ENCODE measurements at regions of chr17 and their contacts with region 1.

Region 1: DNA sequence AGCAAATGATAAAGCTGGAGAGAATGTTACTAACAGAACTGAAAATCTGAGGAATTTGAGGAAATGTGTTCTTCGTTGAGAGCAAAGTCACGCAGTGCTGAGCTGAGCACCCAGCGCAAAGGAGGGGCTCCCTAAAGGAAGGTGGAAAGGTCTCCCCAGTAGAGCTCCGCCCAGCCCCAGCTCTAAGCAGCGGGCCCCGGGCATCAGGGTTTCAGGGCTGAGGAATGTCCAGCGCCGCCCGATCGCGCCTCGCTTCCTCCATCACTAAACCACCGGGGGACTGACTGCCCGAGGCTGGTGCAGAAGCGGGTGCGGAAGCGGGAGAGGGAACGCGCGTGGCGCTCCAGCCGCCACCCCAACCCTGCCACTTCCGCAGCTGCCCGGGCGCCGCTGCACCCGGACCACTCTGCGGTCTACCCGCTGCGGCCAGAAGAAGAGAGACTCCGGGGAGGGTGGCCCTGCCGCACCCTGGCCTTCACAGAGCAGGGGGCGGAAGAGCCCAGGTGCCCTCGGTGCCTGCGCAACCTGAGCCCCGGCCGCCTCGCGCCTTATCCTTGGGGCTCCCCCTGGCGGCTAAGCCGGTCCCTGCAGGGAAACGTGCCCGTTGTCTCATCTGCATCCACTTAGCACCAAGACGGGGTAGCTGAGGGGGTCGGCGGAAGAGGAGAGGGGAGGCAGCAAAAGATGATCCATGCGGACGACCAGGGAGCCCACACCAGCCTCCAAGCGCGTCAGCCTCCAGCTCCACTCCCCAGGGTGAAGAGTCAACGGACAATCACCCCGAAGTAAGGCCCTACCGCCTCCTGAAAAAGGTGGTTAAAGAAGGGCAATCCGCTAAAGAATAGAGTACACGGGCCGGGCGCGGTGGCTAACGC is 12.4 kb upstream of the GUCY2D start:
- DNase-seq: peak; percentile 78 to 94 (median 93)
- ATAC-seq: peak; percentile 83 to 90
- H3K4me3 ChIP-seq: peak overlapping the region; percentile 49
- H3K27ac ChIP-seq: no peak overlapping the region
- H3K4me1 ChIP-seq: no peaks in the 10 kb centered on the region
- H3K27me3 ChIP-seq: no peaks in the 10 kb centered on the region

Region 2: DNA sequence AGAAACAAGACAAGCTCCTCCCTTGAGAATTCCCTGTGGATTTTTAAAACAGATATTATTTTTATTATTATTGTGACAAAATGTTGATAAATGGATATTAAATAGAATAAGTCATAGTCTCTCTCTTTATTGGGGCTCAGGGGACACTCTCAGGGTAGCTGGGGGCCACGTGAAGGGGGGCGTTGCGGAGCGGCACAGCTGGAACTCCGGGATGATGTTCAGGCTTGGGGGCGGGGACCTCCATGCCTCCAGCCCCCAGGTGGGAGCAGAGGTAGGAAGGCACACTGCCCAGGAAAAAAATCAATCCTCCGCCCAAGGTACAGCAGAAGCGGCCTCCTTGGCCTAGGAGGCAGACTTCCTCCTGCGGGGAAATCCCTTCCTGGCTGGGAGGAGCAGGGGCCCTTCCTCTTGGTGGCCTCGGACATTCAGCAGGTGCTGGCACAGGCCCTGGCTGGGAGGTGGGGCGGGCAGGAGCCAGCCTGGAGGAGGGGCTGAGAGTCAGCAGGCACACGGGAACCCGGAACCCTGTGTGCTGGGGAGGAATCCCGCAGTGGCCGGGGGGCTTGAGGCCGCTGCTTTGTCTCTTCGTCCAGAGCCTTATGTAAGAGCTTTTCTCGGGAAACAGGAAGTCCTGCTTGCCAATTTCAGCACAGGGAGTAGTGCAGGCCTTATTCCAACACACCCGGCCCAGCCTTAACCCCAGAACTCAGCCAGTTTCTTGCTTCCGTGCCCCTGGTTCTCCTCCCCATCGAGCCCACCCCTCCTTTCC is 432.1 kb before region 1 on chr17:
- intact Hi-C with region 1: no loop called
- DNase-seq: peak; percentile 86 to 96 (median 95)
- ATAC-seq: peak; percentile 75 to 79
- H3K4me3 ChIP-seq: no peak overlapping the region
- H3K27ac ChIP-seq: peak overlapping the region; percentile 90
- H3K4me1 ChIP-seq: peaks cover 8% of the 10 kb centered on the region
- H3K27me3 ChIP-seq: no peaks in the 10 kb centered on the region

Region 3: GRCh38 chr17:7745748-7746470 is 244.1 kb before region 1 on chr17:
- intact Hi-C with region 1: loop called in 1 of 4 experiments (anchors 5 kb)
- DNase-seq: no peak
- ATAC-seq: peak in 1 of 2 donors; percentile 49
- H3K4me3 ChIP-seq: no peak overlapping the region
- H3K27ac ChIP-seq: no peak overlapping the region
- H3K4me1 ChIP-seq: peaks cover 5% of the 10 kb centered on the region
- H3K27me3 ChIP-seq: no peaks in the 10 kb centered on the region

Region 4: GRCh38 chr17:7823581-7824397 is 166.2 kb before region 1 on chr17:
- intact Hi-C with region 1: loop called in 2 of 4 experiments (anchors 5 kb)
- DNase-seq: no peak
- ATAC-seq: no peak
- H3K4me3 ChIP-seq: no peak overlapping the region
- H3K27ac ChIP-seq: no peak overlapping the region
- H3K4me1 ChIP-seq: no peaks in the 10 kb centered on the region
- H3K27me3 ChIP-seq: no peaks in the 10 kb centered on the region

Region 5: GRCh38 chr17:7862692-7863437 is 127.2 kb before region 1 on chr17:
- intact Hi-C with region 1: loop called (anchors 1 to 5 kb)
- DNase-seq: peak in 2 of 3 donors; percentile 28 to 74
- ATAC-seq: no peak
- H3K4me3 ChIP-seq: no peak overlapping the region
- H3K27ac ChIP-seq: no peak overlapping the region
- H3K4me1 ChIP-seq: no peaks in the 10 kb centered on the region
- H3K27me3 ChIP-seq: no peaks in the 10 kb centered on the region

Region 6: DNA sequence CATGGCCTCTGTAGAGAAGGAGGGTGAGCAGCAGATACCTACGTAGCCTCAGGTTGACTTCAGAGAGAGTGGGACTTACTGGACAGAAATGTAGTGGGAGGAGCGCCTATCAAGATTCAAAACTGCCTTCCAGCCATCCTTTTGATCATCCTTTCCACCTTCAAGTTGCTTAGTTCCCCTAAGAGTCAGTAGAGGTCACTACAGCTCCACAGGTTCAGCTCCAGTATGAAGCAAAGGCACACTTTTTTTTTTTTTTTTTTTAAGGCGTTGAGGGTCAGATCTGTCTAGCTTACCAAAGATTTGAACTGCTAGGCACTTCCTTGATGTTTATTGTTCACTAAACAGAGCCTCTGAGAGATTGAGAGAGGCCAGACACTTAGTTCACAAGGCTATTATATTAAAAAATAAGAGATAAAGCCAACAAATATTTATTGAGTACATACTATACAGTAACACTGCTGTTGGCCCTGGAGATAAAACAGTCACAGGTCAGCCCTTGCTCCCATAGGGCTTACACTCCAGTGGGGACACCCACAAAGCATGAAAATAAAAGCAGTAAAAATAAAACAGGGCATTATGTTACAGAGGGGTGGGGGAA is 77.0 kb before region 1 on chr17:
- intact Hi-C with region 1: loop called in 3 of 4 experiments (anchors 2 to 5 kb)
- DNase-seq: no peak
- ATAC-seq: peak in 1 of 2 donors; percentile 26
- H3K4me3 ChIP-seq: no peak overlapping the region
- H3K27ac ChIP-seq: no peak overlapping the region
- H3K4me1 ChIP-seq: peaks cover 5% of the 10 kb centered on the region
- H3K27me3 ChIP-seq: no peaks in the 10 kb centered on the region

Region 7: GRCh38 chr17:7922845-7923628 is 67.0 kb before region 1 on chr17:
- intact Hi-C with region 1: loop called in 1 of 4 experiments (anchors 5 kb)
- DNase-seq: peak; percentile 88 to 96 (median 96)
- ATAC-seq: peak; percentile 92
- H3K4me3 ChIP-seq: peak overlapping the region; percentile 68
- H3K27ac ChIP-seq: peak overlapping the region; percentile 41
- H3K4me1 ChIP-seq: peaks cover 4% of the 10 kb centered on the region
- H3K27me3 ChIP-seq: no peaks in the 10 kb centered on the region

Region 8: GRCh38 chr17:8016632-8017478 is 26.8 kb after region 1 on chr17:
- intact Hi-C with region 1: no loop called
- DNase-seq: peak; percentile 50 to 74 (median 65)
- ATAC-seq: peak; percentile 53 to 63
- H3K4me3 ChIP-seq: peak overlapping the region; percentile 30
- H3K27ac ChIP-seq: no peak overlapping the region
- H3K4me1 ChIP-seq: no peaks in the 10 kb centered on the region
- H3K27me3 ChIP-seq: no peaks in the 10 kb centered on the region

Region 9: DNA sequence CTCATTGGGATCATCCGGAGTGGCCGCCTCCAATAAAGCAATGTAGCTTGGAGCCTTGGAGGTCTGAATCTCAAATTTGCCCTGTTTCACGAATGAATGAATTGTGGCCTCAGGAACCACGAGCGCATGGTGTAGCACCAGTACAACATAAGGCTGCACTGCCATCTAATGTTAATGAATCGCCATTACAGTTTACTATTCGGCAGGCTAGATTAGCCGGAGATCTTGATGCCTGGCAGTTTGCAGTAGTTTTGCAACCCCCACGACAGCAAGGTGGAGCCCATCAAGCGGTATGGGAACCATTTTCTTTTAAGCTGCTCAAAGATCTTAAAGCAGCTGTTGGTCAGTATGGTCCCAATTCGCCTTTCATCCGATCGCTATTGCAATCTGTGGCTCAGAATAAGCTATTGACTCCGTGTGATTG is 67.7 kb after region 1 on chr17:
- intact Hi-C with region 1: loop called in 2 of 4 experiments (anchors 5 kb)
- DNase-seq: peak in 1 of 3 donors; percentile 60
- ATAC-seq: peak; percentile 76 to 79
- H3K4me3 ChIP-seq: no peak overlapping the region
- H3K27ac ChIP-seq: no peak overlapping the region
- H3K4me1 ChIP-seq: no peaks in the 10 kb centered on the region
- H3K27me3 ChIP-seq: no peaks in the 10 kb centered on the region